Gastrocnemius medialis (tissue), 4 donors: ENCODE measurements at regions of chr1 and their contacts with region 1.

Region 1: GRCh38 chr1:182962554-182963115 is 9.7 kb upstream of the SHCBP1L start:
- DNase-seq: peak; percentile 81 to 85
- ATAC-seq: peak; percentile 100
- H3K4me3 ChIP-seq: peak overlapping the region; percentile 30 to 42 (median 40)
- H3K27ac ChIP-seq: peak overlapping the region; percentile 72 to 79 (median 74)
- H3K4me1 ChIP-seq: peaks cover 3% of the 10 kb centered on the region in 2 donors
- H3K27me3 ChIP-seq: no peaks in the 10 kb centered on the region
- CTCF ChIP-seq: peak; percentile 85 to 97 (median 94)
- POLR2A ChIP-seq: peak; percentile 14 to 71

Region 2: GRCh38 chr1:183090391-183091006 is 127.9 kb after region 1 on chr1:
- in situ Hi-C with region 1: no loop called
- intact Hi-C with region 1: no loop called
- DNase-seq: peak in 1 of 2 donors; percentile 41
- ATAC-seq: peak; percentile 65 to 66
- H3K4me3 ChIP-seq: no peak overlapping the region
- H3K27ac ChIP-seq: no peak overlapping the region
- H3K4me1 ChIP-seq: peaks cover 60 to 66% of the 10 kb centered on the region in 2 donors
- H3K27me3 ChIP-seq: no peaks in the 10 kb centered on the region
- CTCF ChIP-seq: no peak
- POLR2A ChIP-seq: no peak

Region 3: DNA sequence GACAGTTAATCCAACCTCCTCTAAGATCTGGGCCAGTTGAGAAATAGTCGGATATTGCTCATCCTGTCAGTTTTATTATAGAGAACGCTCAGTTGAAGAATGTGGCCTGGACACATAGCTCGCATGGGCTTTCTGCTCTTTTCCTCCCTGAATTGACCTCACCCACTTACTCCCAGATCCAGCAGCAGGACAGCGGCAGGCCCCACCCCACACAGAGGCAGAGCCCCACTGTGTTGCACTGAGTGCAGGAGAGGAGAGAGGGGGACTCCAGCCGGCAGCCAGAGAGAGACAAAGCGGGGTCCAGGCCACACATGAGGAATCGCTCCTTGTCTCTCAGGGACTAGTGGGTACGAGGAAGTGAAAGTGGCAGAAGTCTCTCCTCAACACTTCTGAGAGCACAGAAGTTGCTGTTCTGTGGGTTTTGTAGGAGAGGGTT is 139.2 kb after region 1 on chr1:
- in situ Hi-C with region 1: loop called (anchors 25 kb)
- intact Hi-C with region 1: loop called (anchors 2 kb)
- DNase-seq: no peak
- ATAC-seq: no peak
- H3K4me3 ChIP-seq: no peak overlapping the region
- H3K27ac ChIP-seq: peak overlapping the region; percentile 83 to 93 (median 91)
- H3K4me1 ChIP-seq: peaks cover 86 to 93% of the 10 kb centered on the region in 2 donors
- H3K27me3 ChIP-seq: no peaks in the 10 kb centered on the region
- CTCF ChIP-seq: no peak
- POLR2A ChIP-seq: no peak

Region 4: DNA sequence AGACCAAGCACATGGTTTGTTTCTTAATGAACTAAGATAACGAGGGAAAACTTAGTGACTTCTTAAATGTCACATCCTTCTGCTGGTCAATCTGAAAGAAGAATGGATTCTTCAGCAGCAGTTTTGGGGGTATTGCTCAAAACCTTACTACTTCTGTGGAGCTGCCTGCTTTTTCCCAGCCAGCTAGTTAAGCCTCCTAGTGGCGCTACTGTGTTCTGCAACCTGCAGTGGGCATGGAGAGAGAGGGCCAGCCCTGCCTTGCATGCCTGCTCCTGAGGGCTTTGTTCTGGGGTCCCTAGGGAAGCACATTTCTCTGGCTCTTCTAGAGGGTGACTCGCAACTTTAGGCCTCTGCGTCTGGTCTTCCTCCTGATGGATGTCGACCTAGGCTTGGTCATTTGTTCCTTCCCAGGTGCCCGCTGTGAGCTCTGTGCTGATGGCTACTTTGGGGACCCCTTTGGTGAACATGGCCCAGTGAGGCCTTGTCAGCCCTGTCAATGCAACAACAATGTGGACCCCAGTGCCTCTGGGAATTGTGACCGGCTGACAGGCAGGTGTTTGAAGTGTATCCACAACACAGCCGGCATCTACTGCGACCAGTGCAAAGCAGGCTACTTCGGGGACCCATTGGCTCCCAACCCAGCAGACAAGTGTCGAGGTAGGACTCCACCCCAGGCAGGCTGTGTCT is 265.5 kb after region 1 on chr1:
- in situ Hi-C with region 1: loop called in 3 of 4 experiments (anchors 10 to 25 kb)
- intact Hi-C with region 1: no loop called
- DNase-seq: no peak
- ATAC-seq: peak; percentile 53 to 74
- H3K4me3 ChIP-seq: no peak overlapping the region
- H3K27ac ChIP-seq: no peak overlapping the region
- H3K4me1 ChIP-seq: peaks cover 0 to 2% of the 10 kb centered on the region in 2 donors
- H3K27me3 ChIP-seq: no peaks in the 10 kb centered on the region
- CTCF ChIP-seq: peak; percentile 42 to 70 (median 65)
- POLR2A ChIP-seq: no peak

Region 5: GRCh38 chr1:183281553-183282091 is 319.0 kb after region 1 on chr1:
- in situ Hi-C with region 1: loop called in 1 of 4 experiments (anchors 25 kb)
- intact Hi-C with region 1: loop called (anchors 5 kb)
- DNase-seq: peak; percentile 85 to 89
- ATAC-seq: peak; percentile 88 to 94
- H3K4me3 ChIP-seq: peak overlapping the region; percentile 6 to 72 (median 29)
- H3K27ac ChIP-seq: peak overlapping the region; percentile 63 to 78 (median 74)
- H3K4me1 ChIP-seq: peaks cover 22 to 26% of the 10 kb centered on the region in 2 donors
- H3K27me3 ChIP-seq: no peaks in the 10 kb centered on the region
- CTCF ChIP-seq: peak; percentile 86 to 94 (median 90)
- POLR2A ChIP-seq: no peak